Mammary epithelial cell (primary cell): ENCODE measurements at regions of chr6 and their contacts with region 1.

Region 1: DNA sequence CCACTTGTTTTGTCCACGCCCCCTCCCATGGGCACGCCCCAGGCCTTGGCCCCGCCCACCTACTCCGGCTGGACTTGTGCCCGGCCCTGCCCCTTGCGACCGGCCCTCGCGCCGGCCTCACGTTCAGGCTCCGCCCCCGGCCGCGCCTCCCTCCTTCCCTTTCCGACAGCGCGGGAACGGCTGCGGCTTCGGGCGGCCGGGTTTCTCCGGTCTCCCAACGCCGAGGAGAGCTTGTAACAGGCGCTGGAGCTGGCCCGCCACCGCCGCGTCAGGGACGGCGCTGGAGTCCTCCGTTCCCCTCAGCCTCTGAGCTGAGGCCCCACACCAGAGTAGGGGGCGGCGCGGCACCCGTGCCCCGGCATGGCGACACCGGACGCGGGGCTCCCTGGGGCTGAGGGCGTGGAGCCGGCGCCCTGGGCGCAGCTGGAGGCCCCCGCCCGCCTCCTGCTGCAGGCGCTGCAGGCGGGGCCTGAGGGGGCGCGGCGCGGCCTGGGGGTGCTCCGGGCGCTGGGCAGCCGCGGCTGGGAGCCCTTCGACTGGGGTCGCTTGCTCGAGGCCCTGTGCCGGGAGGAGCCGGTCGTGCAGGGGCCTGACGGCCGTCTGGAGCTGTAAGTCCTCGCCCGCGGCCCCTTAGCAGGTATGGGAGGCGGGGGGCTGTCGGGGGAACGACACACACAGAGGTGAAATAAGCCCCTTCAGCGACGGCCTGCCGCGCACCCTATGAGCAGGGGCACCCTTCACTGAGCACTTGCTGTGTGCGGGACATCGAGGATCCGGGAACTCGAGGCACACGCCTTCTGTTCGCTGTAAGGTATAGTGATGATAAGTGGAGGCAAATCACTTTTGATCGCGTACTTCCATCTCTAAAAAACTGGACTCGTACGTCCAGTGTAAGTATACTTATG is at the start of gene FANCE:
- DNase-seq: peak; percentile 88
- H3K4me3 ChIP-seq: peak within 1 kb of the TSS; percentile 59 to 80 (median 61)
- H3K27ac ChIP-seq: peak within 1 kb of the TSS; percentile 28
- H3K4me1 ChIP-seq: peaks cover 26% of the 10 kb centered on the region
- H3K27me3 ChIP-seq: no peaks in the 10 kb centered on the region
- CTCF ChIP-seq: no peak
- total RNA-seq, gene FANCE: 3.7 to 12.8 TPM

Region 2: DNA sequence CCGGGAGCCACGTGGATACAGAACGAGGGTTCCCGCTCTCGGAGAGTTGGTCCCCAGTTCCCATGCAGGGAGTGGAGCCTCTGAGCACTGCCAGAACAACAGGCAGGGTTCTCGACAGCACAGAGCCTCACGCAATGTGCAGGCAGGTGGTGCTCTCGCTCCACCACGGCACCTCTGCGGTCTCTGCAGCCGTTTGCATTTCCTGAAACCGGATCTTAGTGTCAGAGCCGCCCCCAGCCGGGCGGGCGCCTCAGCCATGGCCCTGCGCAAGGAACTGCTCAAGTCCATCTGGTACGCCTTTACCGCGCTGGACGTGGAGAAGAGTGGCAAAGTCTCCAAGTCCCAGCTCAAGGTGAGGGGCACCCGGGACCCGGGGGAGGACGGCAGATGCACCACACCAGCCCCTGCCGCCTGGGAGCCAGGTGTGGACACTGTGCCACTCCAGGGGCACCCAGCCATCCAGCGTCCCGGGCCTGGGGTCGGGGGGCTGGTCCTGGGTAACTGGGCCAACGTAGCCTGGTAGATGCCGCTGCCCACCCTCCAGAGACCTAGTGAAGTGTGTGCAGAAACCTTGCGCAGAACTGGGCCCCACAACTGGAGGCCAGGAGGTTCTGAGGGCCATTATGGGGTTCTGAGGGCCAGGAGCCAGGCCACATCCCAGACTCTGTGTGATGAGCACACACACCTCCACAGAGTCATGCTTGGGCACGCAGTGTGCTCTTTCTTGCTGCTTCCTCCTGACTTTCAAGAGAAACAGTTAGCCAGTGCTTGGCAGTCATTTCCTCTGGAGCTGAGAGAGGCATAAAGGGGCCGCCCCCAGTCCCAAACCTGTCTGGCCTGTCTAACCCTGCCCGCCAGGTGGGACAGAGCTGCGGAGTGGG is 154.6 kb before region 1 on chr6 and contains the start of gene DEF6:
- CTCF ChIA-PET with region 1: interaction called, 3 read pairs
- dilution Hi-C with region 1: no loop called
- in situ Hi-C with region 1: no loop called
- intact Hi-C with region 1: loop called (anchors 1 kb)
- DNase-seq: peak; percentile 90
- H3K4me3 ChIP-seq: peak within 1 kb of the TSS; percentile 66 to 85 (median 76)
- H3K27ac ChIP-seq: peak within 1 kb of the TSS; percentile 80
- H3K4me1 ChIP-seq: peaks cover 35% of the 10 kb centered on the region
- H3K27me3 ChIP-seq: no peaks in the 10 kb centered on the region
- CTCF ChIP-seq: peak; percentile 92 to 98
- total RNA-seq, gene DEF6: 12.8 to 32.9 TPM

Region 3: GRCh38 chr6:35391240-35391968 is 61.0 kb before region 1 on chr6:
- CTCF ChIA-PET with region 1: interaction called, 4 read pairs
- dilution Hi-C with region 1: no loop called
- in situ Hi-C with region 1: no loop called
- intact Hi-C with region 1: loop called (anchors 1 kb)
- DNase-seq: peak; percentile 97
- H3K4me3 ChIP-seq: no peak overlapping the region
- H3K27ac ChIP-seq: peak overlapping the region; percentile 96
- H3K4me1 ChIP-seq: peaks cover 51% of the 10 kb centered on the region
- H3K27me3 ChIP-seq: no peaks in the 10 kb centered on the region
- CTCF ChIP-seq: peak; percentile 4 to 50

Region 4: DNA sequence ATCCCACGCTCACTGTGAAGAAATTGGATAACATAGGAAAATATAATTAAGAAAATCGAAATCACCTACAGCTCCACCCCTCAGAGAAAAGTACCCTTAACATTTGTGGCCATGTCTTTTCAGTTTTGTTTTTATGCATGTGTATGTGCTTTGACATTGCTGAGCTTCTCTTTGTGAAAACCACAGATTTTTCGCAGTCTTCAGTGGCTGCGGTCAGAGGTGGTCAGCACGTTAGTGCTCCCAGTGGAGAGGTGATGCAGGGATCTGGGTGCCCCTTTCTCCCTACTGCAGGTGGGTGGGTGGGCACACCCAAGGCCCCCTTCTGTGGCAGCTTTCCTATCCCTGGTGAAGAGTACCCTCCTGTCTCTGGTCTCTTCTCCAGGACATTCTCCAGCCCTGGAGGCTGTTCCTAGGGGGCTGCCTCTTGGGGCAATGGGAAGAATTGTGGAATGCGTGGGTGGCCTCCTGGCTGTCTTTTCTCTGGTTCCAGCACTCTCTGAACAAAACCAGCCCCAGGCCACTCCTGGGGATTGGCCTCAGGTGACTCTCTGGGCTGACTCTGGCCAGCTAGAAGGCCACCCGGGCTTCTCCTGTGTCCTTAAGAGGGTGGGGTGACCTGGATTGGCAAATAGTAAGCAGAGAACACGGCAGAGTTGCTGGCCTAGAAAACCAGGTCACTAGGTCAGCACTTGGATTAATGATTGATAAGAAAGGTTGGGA is 50.1 kb before region 1 on chr6:
- CTCF ChIA-PET with region 1: no interaction called
- dilution Hi-C with region 1: no loop called
- in situ Hi-C with region 1: no loop called
- intact Hi-C with region 1: loop called (anchors 1 kb)
- DNase-seq: no peak
- H3K4me3 ChIP-seq: no peak overlapping the region
- H3K27ac ChIP-seq: peak overlapping the region; percentile 97
- H3K4me1 ChIP-seq: peaks cover 39% of the 10 kb centered on the region
- H3K27me3 ChIP-seq: no peaks in the 10 kb centered on the region
- CTCF ChIP-seq: no peak

Region 5: GRCh38 chr6:35415065-35415991 is 37.1 kb before region 1 on chr6:
- CTCF ChIA-PET with region 1: interaction called, 4 read pairs
- dilution Hi-C with region 1: no loop called
- in situ Hi-C with region 1: no loop called
- intact Hi-C with region 1: loop called (anchors 1 kb)
- DNase-seq: peak; percentile 63
- H3K4me3 ChIP-seq: no peak overlapping the region
- H3K27ac ChIP-seq: no peak overlapping the region
- H3K4me1 ChIP-seq: peaks cover 7% of the 10 kb centered on the region
- H3K27me3 ChIP-seq: no peaks in the 10 kb centered on the region
- CTCF ChIP-seq: peak; percentile 70 to 74

Region 6: DNA sequence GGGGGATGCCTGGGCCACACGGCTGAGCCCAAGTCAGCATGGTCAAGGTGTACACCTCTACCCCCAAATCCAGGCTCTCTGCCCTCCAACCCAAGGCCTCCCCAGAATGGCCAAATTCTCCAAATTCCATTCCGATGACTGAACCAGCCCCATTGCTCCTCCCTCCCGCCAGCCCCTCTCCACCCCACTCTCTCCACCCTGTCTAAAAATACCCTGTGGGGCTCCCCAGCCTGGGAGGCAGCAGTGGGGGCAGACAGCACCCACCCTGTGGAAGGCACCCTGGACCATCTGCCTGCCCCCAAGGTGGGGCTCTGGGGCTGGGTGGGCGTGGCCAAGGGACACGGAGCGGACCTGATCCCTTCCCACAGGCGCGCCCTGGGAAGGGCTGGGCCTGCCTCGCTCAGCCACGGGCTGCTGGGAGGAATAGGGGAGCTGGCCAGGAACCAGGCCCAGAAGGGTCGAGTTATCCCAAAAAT is 33.0 kb after region 1 on chr6:
- CTCF ChIA-PET with region 1: no interaction called
- dilution Hi-C with region 1: no loop called
- in situ Hi-C with region 1: no loop called
- intact Hi-C with region 1: loop called (anchors 1 kb)
- DNase-seq: peak; percentile 74
- H3K4me3 ChIP-seq: peak overlapping the region; percentile 9 to 33 (median 21)
- H3K27ac ChIP-seq: peak overlapping the region; percentile 98
- H3K4me1 ChIP-seq: peaks cover 57% of the 10 kb centered on the region
- H3K27me3 ChIP-seq: no peaks in the 10 kb centered on the region
- CTCF ChIP-seq: no peak